ENCODE measurements at regions of chr3 and their contacts with region 1.

Region 1: GRCh38 chr3:136186344-136186743 is 9.8 kb downstream of the MSL2 start:
- DNase-seq: peak; percentile 48
- ATAC-seq: peak; percentile 64
- H3K4me3 Mint-ChIP-seq: no peak overlapping the region
- H3K27ac Mint-ChIP-seq: peak overlapping the region; percentile 50
- H3K4me1 Mint-ChIP-seq: peaks cover 78% of the 10 kb centered on the region
- H3K27me3 Mint-ChIP-seq: no peaks in the 10 kb centered on the region
- CTCF ChIP-seq: no peak

Region 2: DNA sequence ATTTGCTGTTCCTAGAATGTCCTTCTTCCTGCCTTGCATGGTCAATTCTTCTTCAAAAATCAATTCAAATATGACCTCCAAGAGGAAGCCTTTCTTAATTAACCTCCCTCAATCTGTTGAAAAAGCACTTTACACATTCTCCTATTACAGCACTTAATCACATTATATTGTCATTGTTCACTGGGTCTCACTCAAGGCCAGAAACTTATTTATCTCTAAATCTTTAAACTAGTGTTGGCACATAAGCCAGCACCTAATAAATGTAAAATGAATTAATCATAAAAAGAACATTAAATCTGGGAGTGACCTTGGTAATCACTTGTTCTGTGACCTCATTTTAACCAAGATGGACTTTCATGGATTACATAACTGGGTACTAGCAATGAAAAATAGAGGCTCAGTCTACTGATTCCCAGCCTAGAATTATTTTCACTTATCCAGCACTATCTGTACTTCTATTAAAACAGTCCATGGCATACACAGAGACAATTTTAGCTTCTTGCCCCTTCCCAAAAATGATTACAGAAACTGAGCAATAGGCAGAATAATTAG is 12.3 kb before region 1 on chr3:
- CTCF ChIA-PET with region 1: interaction called, 3 read pairs
- POLR2A ChIA-PET with region 1: interaction called, 13 read pairs
- intact Hi-C with region 1: no loop called
- DNase-seq: no peak
- ATAC-seq: no peak
- H3K4me3 Mint-ChIP-seq: no peak overlapping the region
- H3K27ac Mint-ChIP-seq: peak overlapping the region; percentile 17
- H3K4me1 Mint-ChIP-seq: peaks cover 29% of the 10 kb centered on the region
- H3K27me3 Mint-ChIP-seq: no peaks in the 10 kb centered on the region
- CTCF ChIP-seq: no peak

Measured in activated CD8-positive, alpha-beta T cell treated with anti-CD3 and anti-CD28 coated beads for 36 hours (primary cell).